ENCODE measurements at regions of chr4 and their contacts with region 1.

Region 1: DNA sequence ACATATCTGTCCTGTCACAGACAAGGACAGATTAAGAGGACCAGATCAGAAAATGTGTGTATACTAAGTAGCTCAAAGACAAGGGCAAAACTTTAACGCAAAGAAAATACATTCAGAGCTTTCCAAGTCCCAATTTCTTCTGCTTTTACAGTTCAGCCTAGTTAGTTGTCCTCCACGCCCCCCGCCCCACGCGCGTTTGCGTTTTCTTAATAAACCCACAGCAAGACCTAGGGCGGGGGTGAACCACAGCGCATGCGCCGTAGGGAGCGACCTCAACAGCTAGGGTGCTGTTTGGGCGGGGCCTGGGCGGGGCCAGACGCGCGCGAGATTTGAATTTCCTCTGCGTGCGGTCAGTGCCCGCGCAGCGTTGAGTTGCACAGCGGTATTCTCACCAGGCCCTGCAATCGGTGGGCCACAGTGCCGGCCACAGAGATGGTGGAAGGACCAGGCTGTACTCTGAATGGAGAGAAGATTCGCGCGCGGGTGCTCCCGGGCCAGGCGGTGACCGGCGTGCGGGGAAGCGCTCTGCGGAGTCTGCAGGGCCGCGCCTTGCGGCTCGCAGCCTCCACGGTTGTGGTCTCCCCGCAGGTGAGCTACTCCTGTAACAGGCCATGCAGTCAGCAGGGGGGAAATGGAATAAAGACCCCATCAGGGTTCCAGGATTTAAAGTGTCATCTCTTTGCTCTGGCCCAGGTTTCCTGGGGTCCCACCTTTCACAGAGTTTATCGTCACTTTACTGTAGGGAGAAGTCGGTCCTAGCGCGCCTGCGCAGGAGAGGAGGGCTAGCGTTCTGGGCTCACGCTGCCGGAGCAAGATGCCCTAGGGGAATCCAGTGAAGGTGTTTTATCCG is at the start of gene NEIL3:
- DNase-seq: peak; percentile 98
- H3K4me3 Mint-ChIP-seq: peak within 1 kb of the TSS; percentile 92
- H3K27ac Mint-ChIP-seq: peak within 1 kb of the TSS; percentile 94
- H3K4me1 Mint-ChIP-seq: peaks cover 57% of the 10 kb centered on the region
- H3K27me3 Mint-ChIP-seq: no peaks in the 10 kb centered on the region
- total RNA-seq, gene NEIL3: 34.6 to 38.9 TPM

Region 2: DNA sequence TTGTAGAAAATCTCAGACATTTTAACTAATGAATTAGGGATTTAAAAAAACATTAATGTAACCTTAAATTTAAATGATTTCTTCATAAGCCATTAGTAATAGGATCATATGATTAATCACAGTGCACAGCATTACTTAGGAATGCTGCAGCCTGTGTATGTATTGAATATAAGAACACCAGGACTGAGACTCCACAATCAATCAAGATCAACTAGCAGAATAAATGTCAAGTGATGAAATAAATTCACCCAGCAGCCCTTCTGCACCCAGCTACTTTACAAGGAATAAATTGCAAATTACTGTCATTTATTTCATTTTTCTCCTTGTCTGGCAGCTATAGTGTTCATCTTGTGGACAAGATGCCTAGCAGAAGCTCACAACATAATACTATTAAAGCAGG is 46.5 kb after region 1 on chr4:
- CTCF ChIA-PET with region 1: no interaction called
- POLR2A ChIA-PET with region 1: no interaction called
- DNase-seq: no peak
- H3K4me3 Mint-ChIP-seq: no peak overlapping the region
- H3K27ac Mint-ChIP-seq: no peak overlapping the region
- H3K4me1 Mint-ChIP-seq: no peaks in the 10 kb centered on the region
- H3K27me3 Mint-ChIP-seq: no peaks in the 10 kb centered on the region

Region 3: GRCh38 chr4:177367336-177367735 is 57.6 kb after region 1 on chr4:
- CTCF ChIA-PET with region 1: no interaction called
- POLR2A ChIA-PET with region 1: no interaction called
- DNase-seq: peak; percentile 53
- H3K4me3 Mint-ChIP-seq: no peak overlapping the region
- H3K27ac Mint-ChIP-seq: no peak overlapping the region
- H3K4me1 Mint-ChIP-seq: peaks cover 14% of the 10 kb centered on the region
- H3K27me3 Mint-ChIP-seq: no peaks in the 10 kb centered on the region

Region 4: DNA sequence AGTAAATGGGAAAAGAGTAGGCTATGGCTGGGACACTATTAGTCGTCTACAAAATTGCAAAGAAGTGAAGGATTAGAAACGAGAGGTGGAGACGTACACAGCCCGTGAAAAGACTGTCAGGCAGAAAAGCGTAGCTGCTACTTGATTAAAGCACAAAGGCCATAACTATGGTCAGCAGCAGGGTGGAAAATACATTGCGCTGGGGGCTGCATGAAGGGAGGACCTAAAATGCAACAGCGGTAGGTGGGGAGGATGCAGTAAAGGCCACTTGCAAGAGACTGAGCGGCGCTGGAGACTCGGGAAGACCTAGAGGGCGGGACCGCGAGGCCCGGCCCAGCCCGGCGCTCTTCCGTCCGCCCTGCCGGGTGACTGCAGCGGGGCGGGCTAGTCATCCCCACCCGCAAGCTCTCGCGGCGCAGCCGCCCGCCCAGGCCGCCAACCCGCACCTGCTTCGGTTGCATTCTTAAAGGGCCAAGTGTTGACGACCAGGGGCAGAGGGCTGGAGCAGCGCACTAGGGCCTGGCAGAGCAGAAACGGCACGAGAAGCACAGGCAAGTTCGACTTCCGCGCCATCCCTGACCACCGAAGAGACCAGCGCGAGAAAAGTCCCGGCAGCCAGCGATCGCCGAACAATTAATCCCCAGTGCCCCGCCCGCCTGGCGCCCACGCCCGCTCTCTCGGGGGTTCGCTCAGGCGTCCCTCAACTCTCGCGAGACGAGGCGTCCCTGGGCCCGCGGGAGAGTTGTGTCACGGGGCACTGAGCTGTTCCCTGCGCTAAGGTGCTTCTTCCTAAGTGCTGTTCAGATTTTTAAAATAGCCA is 132.3 kb after region 1 on chr4 and contains the start of gene AGA:
- CTCF ChIA-PET with region 1: no interaction called
- POLR2A ChIA-PET with region 1: interaction called, 11 read pairs
- DNase-seq: peak; percentile 97
- H3K4me3 Mint-ChIP-seq: peak within 1 kb of the TSS; percentile 85
- H3K27ac Mint-ChIP-seq: peak within 1 kb of the TSS; percentile 97
- H3K4me1 Mint-ChIP-seq: peaks cover 38% of the 10 kb centered on the region
- H3K27me3 Mint-ChIP-seq: no peaks in the 10 kb centered on the region
- total RNA-seq, gene AGA: 26.0 to 29.0 TPM